Activated B cell treated with CpG ODN at 0.5 μM for 24 hours (primary cell): ENCODE measurements at regions of chr6 and their contacts with region 1.

Region 1: GRCh38 chr6:26156076-26156849 is 69.0 kb downstream of the HFE start:
- DNase-seq: peak; percentile 87
- ATAC-seq: peak; percentile 59
- H3K4me3 Mint-ChIP-seq: peak overlapping the region; percentile 88
- H3K27ac Mint-ChIP-seq: peak overlapping the region; percentile 99
- H3K4me1 Mint-ChIP-seq: peaks cover 45% of the 10 kb centered on the region
- H3K27me3 Mint-ChIP-seq: no peaks in the 10 kb centered on the region
- CTCF ChIP-seq: no peak

Region 2: GRCh38 chr6:25821341-25821740 is 334.9 kb before region 1 on chr6:
- CTCF ChIA-PET with region 1: no interaction called
- POLR2A ChIA-PET with region 1: no interaction called
- intact Hi-C with region 1: no loop called
- DNase-seq: no peak
- ATAC-seq: no peak
- H3K4me3 Mint-ChIP-seq: no peak overlapping the region
- H3K27ac Mint-ChIP-seq: no peak overlapping the region
- H3K4me1 Mint-ChIP-seq: no peaks in the 10 kb centered on the region
- H3K27me3 Mint-ChIP-seq: peaks cover 25% of the 10 kb centered on the region
- CTCF ChIP-seq: no peak

Region 3: GRCh38 chr6:26031595-26032339 is 124.5 kb before region 1 on chr6:
- CTCF ChIA-PET with region 1: no interaction called
- POLR2A ChIA-PET with region 1: interaction called, 91 read pairs
- intact Hi-C with region 1: loop called (anchors 1 kb)
- DNase-seq: peak; percentile 55
- ATAC-seq: peak; percentile 62
- H3K4me3 Mint-ChIP-seq: peak overlapping the region; percentile 93
- H3K27ac Mint-ChIP-seq: peak overlapping the region; percentile 98
- H3K4me1 Mint-ChIP-seq: peaks cover 40% of the 10 kb centered on the region
- H3K27me3 Mint-ChIP-seq: peaks cover 2% of the 10 kb centered on the region
- CTCF ChIP-seq: no peak

Region 4: GRCh38 chr6:26122793-26123674 is 33.2 kb before region 1 on chr6:
- CTCF ChIA-PET with region 1: interaction called, 31 read pairs
- POLR2A ChIA-PET with region 1: interaction called, 1,682 read pairs
- intact Hi-C with region 1: loop called (anchors 1 kb)
- DNase-seq: peak; percentile 68
- ATAC-seq: peak; percentile 60
- H3K4me3 Mint-ChIP-seq: peak overlapping the region; percentile 94
- H3K27ac Mint-ChIP-seq: peak overlapping the region; percentile 99
- H3K4me1 Mint-ChIP-seq: peaks cover 34% of the 10 kb centered on the region
- H3K27me3 Mint-ChIP-seq: no peaks in the 10 kb centered on the region
- CTCF ChIP-seq: no peak

Region 5: DNA sequence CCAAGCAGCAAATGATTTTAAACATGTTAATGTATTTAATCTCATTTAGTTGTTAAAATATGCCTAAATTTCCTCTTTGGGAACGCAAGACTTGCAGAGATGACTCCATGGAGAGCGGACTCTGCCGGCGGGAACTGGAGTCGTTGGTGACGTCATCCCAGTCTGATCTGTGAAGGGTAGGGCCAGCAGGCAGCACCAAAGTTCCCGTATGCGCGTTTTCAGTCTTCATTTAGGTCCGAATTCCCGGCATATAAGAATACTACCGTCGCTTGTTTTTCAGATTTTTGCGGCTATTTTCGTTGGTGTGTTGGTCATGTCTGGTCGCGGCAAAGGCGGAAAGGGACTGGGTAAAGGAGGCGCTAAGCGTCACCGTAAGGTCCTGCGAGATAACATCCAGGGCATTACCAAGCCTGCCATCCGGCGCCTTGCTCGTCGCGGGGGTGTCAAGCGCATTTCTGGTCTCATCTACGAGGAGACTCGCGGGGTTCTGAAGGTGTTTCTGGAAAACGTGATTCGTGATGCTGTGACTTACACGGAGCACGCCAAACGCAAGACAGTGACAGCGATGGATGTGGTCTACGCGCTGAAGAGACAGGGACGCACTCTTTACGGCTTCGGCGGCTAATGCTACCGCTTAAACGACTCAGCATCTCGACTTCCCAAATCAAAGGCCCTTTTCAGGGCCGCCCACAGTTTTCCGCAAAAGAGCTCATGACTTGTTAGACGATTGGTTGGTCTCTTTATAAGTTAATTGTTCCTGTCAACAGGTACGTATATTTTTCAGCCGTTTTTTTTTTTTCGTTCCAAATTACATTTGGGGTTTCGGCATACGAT is 48.3 kb after region 1 on chr6:
- CTCF ChIA-PET with region 1: no interaction called
- POLR2A ChIA-PET with region 1: interaction called, 1,229 read pairs
- intact Hi-C with region 1: loop called (anchors 1 kb)
- DNase-seq: peak; percentile 70
- ATAC-seq: peak; percentile 59
- H3K4me3 Mint-ChIP-seq: no peak overlapping the region
- H3K27ac Mint-ChIP-seq: no peak overlapping the region
- H3K4me1 Mint-ChIP-seq: peaks cover 30% of the 10 kb centered on the region
- H3K27me3 Mint-ChIP-seq: peaks cover 2% of the 10 kb centered on the region
- CTCF ChIP-seq: no peak

Region 6: GRCh38 chr6:26285143-26286134 is 129.2 kb after region 1 on chr6:
- CTCF ChIA-PET with region 1: no interaction called
- POLR2A ChIA-PET with region 1: interaction called, 86 read pairs
- intact Hi-C with region 1: loop called (anchors 1 kb)
- DNase-seq: peak; percentile 80
- ATAC-seq: peak; percentile 75
- H3K4me3 Mint-ChIP-seq: peak overlapping the region; percentile 86
- H3K27ac Mint-ChIP-seq: peak overlapping the region; percentile 96
- H3K4me1 Mint-ChIP-seq: peaks cover 29% of the 10 kb centered on the region
- H3K27me3 Mint-ChIP-seq: peaks cover 3% of the 10 kb centered on the region
- CTCF ChIP-seq: no peak

Region 7: GRCh38 chr6:27138837-27139755 is 982.8 kb after region 1 on chr6:
- CTCF ChIA-PET with region 1: no interaction called
- POLR2A ChIA-PET with region 1: interaction called, 93 read pairs
- intact Hi-C with region 1: no loop called
- DNase-seq: peak; percentile 59
- ATAC-seq: peak; percentile 82
- H3K4me3 Mint-ChIP-seq: peak overlapping the region; percentile 97
- H3K27ac Mint-ChIP-seq: peak overlapping the region; percentile 98
- H3K4me1 Mint-ChIP-seq: peaks cover 62% of the 10 kb centered on the region
- H3K27me3 Mint-ChIP-seq: no peaks in the 10 kb centered on the region
- CTCF ChIP-seq: no peak

Region 8: GRCh38 chr6:27871924-27872638 is 1715.8 kb after region 1 on chr6:
- CTCF ChIA-PET with region 1: no interaction called
- POLR2A ChIA-PET with region 1: interaction called, 136 read pairs
- intact Hi-C with region 1: loop called (anchors 2 kb)
- DNase-seq: peak; percentile 73
- ATAC-seq: peak; percentile 80
- H3K4me3 Mint-ChIP-seq: peak overlapping the region; percentile 94
- H3K27ac Mint-ChIP-seq: peak overlapping the region; percentile 95
- H3K4me1 Mint-ChIP-seq: peaks cover 36% of the 10 kb centered on the region
- H3K27me3 Mint-ChIP-seq: no peaks in the 10 kb centered on the region
- CTCF ChIP-seq: no peak